Activated CD4-positive, alpha-beta T cell treated with anti-CD3 and anti-CD28 coated beads, Interleukin-2, amount 10 ng/mL, durations not matched to agents 24 days and 14 days (primary cell): ENCODE measurements at regions of chr16 and their contacts with region 1.

Region 1: DNA sequence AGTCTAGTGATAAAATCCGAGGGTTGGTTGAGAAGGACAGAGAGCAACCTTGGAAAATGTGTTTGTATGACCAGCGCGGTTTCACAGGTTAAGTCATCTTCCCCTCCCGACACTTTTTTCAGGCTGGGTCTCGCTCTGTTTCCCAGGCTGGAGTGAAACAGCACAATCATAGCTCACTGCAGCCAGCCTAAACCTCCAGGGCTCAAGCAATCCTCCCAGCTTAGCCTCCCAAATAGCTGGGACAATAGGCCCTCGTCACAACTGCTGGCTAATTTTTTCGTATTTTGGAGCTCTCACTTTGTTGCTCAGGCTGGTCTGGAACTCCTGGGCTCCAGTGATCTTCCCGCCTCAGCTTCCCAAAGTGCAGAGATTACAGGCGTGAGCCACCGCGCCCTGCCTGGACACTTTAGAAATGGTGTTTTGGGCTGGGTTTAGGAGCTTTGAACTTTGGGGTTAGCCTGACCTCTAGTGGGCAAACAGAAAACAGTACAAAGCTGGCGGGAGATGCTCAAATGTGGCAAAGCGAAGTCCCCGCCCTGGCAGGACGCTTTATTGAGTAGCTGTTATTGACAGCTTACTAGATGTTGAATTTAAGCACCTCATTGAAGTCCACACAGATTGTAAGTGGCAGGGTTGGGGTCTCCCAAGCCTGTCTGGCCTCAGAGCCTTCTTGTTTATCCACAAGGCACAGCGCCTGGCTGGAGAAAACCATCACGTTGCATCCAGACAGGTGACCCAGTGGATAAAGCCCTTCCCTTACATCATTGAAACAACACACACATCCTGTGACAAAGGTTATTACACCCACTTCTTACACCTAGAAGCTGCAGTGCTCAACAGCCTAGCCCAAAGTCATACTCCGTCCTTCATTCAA is 34.7 kb upstream of the RBBP6 start:
- DNase-seq: peak; percentile 87
- H3K4me3 Mint-ChIP-seq: no peak overlapping the region
- H3K27ac Mint-ChIP-seq: no peak overlapping the region
- H3K4me1 Mint-ChIP-seq: peaks cover 2% of the 10 kb centered on the region
- H3K27me3 Mint-ChIP-seq: peaks cover 14% of the 10 kb centered on the region

Region 2: GRCh38 chr16:24041826-24042631 is 462.7 kb before region 1 on chr16:
- intact Hi-C with region 1: loop called (anchors 1 kb)
- DNase-seq: peak; percentile 92
- H3K4me3 Mint-ChIP-seq: no peak overlapping the region
- H3K27ac Mint-ChIP-seq: no peak overlapping the region
- H3K4me1 Mint-ChIP-seq: peaks cover 4% of the 10 kb centered on the region
- H3K27me3 Mint-ChIP-seq: no peaks in the 10 kb centered on the region

Region 3: DNA sequence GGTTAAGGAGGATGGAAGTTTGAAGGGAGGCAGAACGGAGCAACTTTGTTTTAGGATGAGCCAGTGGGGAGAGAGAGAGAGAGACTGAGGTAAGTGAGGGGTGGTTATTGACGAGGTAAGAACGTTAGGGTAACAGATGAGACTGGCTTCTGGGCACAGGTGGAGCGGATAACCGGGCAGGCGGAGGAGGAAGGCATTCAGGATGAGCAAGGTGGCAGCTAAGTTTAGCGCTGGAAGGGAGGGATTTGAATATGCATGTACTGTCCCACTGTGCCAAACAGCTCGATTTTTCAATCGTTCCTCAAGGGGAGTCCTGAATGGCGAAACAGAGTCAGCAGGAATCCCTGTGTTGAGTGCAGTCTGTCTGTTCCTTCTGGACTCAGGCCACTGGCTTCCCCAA is 212.8 kb before region 1 on chr16:
- intact Hi-C with region 1: loop called (anchors 10 kb)
- DNase-seq: no peak
- H3K4me3 Mint-ChIP-seq: no peak overlapping the region
- H3K27ac Mint-ChIP-seq: no peak overlapping the region
- H3K4me1 Mint-ChIP-seq: no peaks in the 10 kb centered on the region
- H3K27me3 Mint-ChIP-seq: peaks cover 9% of the 10 kb centered on the region

Region 4: DNA sequence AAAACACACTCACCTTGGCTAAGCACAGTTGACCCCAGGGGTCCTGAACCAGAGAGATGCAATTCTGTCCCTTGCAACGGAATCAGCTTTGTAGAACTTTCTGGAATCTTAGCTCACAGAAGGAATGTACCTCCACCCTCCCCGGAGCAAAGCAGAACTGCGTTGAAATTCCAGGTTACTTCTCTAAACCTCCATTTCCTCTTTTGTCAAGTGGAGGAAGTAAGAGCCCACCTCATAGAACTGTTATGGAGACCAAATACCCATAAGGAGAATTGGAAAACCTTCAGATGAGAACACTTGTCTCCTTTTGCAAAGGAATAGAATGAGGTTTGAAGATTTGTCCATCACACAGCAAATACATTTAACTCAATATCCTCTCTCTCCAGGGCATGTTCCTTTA is 52.0 kb before region 1 on chr16:
- intact Hi-C with region 1: no loop called
- DNase-seq: no peak
- H3K4me3 Mint-ChIP-seq: no peak overlapping the region
- H3K27ac Mint-ChIP-seq: no peak overlapping the region
- H3K4me1 Mint-ChIP-seq: no peaks in the 10 kb centered on the region
- H3K27me3 Mint-ChIP-seq: peaks cover 8% of the 10 kb centered on the region

Region 5: GRCh38 chr16:24516900-24517669 is 12.4 kb after region 1 on chr16:
- intact Hi-C with region 1: no loop called
- DNase-seq: peak; percentile 93
- H3K4me3 Mint-ChIP-seq: peak overlapping the region; percentile 42
- H3K27ac Mint-ChIP-seq: no peak overlapping the region
- H3K4me1 Mint-ChIP-seq: peaks cover 11% of the 10 kb centered on the region
- H3K27me3 Mint-ChIP-seq: peaks cover 8% of the 10 kb centered on the region